ENCODE measurements at regions of chr13 and their contacts with region 1.

Region 1: GRCh38 chr13:113029487-113030258 is 60.7 kb downstream of the MCF2L start:
- DNase-seq: peak; percentile 44
- H3K4me3 Mint-ChIP-seq: no peak overlapping the region
- H3K27ac Mint-ChIP-seq: no peak overlapping the region
- H3K4me1 Mint-ChIP-seq: no peaks in the 10 kb centered on the region
- H3K27me3 Mint-ChIP-seq: peaks cover 12% of the 10 kb centered on the region
- CTCF ChIP-seq: peak; percentile 33

Region 2: DNA sequence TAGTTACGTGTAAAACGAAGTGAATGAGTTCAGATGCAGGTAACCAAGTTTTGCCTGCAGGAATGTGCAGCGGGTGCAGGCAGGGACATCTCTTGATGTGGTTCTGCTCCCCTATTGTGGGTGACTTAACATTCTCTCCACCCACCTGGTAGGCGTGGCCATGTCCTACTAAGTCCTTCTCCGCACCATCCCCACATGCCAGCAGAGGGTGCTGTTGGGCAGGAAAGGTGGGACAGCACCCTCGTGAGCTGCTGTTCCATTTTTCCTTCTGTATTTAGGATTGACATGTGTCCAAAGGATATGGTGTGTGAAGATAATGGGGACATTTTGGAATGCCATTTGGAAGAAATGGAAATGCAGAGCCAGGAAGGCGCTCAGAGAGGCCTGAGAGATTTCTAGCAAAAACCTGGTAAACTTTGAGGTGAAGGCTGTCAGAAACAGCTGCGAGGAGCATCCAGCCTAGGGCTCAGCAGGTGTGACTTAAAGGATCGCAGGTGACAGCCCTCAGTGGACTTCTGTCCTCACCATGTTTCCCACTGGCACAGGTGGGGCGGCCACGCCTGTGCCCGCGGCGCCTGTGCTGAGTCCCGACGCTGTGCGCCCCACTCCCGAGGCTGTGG is 86.9 kb before region 1 on chr13:
- CTCF ChIA-PET with region 1: interaction called, 3 read pairs
- intact Hi-C with region 1: loop called (anchors 1 kb)
- DNase-seq: peak; percentile 84
- H3K4me3 Mint-ChIP-seq: peak overlapping the region; percentile 78
- H3K27ac Mint-ChIP-seq: no peak overlapping the region
- H3K4me1 Mint-ChIP-seq: peaks cover 5% of the 10 kb centered on the region
- H3K27me3 Mint-ChIP-seq: no peaks in the 10 kb centered on the region
- CTCF ChIP-seq: peak; percentile 22

Measured in Calu3 (cell line).